Activated T-helper 1 cell treated with anti-CD3 and anti-CD28 coated beads, Interleukin-12 subunit alpha, Interleukin-12 subunit beta, Interleukin-2, Interleukin-4 antibody, amounts not matched to agents 30 ng/mL and 10 ng/mL and 1 ng/mL, durations not matched to agents 14 hours and 24 hours and 36 hours (primary cell): ENCODE measurements at regions of chr1 and their contacts with region 1.

Region 1: GRCh38 chr1:180981596-180982387 is 40.9 kb downstream of the STX6 start:
- DNase-seq: peak; percentile 62
- H3K4me3 Mint-ChIP-seq: peak overlapping the region; percentile 61
- H3K27ac Mint-ChIP-seq: peak overlapping the region; percentile 37
- H3K4me1 Mint-ChIP-seq: peaks cover 35% of the 10 kb centered on the region
- H3K27me3 Mint-ChIP-seq: no peaks in the 10 kb centered on the region

Region 2: DNA sequence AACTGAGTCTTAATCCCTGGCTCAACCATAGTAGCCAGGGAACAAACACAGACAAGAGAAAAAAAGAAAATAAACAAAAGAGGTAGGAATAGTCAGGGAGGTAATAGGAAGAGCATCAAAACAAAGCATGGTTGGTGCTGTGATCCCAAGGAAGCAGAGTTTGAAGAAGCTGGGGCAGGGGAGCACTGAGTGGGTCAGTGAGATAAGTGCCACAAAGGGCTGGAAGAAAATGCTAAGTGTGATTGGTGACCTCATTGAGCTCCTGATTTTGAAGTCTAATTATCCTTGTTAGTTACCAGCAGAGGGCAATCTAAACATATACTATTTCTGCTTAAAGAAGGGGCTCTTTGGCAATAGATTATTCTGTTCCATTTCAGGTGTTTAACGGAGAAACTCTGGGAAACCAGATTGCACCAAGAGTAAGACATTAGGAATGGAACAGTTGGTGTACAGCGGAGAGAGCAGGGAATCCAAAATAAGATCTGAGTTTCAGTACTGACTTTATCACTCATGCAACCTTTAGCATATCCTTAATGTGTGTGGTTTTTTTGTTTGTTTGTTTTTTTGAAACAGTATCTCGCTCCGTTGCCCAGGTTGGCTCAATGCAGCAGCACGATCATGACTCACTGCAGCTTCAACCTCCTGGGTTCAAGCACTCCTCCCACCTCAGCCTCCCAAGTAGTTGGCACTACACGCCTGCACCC is 99.8 kb before region 1 on chr1:
- intact Hi-C with region 1: loop called (anchors 5 kb)
- DNase-seq: no peak
- H3K4me3 Mint-ChIP-seq: no peak overlapping the region
- H3K27ac Mint-ChIP-seq: no peak overlapping the region
- H3K4me1 Mint-ChIP-seq: peaks cover 6% of the 10 kb centered on the region
- H3K27me3 Mint-ChIP-seq: no peaks in the 10 kb centered on the region

Region 3: DNA sequence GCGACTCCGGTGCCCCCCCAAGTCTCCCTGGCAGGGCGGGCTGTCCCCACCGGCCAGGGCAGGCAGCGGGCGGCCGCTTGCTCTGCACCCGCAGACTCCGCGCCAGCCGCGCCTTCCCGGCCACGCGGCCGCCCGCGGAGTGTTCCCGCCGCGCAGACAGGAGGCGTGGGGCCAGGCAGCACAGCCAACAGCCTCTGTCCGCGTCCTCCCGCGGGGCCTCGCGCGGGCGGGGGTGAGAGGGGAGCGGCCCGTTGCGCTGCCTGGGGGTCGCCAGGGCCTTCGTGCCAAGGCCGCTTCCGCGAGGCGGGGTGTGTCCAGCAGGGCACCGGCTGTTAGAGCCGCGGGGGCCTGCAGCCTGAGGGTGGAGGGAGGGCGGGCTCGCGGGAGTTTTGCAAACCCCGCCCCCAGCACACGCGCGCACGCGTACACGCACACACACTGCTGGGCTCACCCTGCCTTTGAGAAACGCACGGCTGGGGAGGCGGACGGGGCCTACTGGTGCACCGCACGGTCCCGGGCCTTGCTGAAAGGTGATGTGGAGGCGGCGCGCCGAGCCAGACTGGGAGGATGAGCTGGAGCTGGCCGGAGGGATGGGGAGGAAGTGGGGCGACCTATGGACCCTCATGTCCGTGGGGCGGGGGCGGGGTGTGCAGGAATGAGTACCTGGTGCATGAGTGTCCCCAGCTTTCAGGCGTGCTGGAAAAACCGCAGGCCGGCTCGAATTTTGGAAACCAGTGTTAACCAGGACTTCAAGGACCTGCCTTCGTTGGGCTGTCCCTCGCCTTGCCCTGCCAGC is 27.6 kb before region 1 on chr1:
- intact Hi-C with region 1: loop called (anchors 2 kb)
- DNase-seq: peak; percentile 49
- H3K4me3 Mint-ChIP-seq: peak overlapping the region; percentile 33
- H3K27ac Mint-ChIP-seq: no peak overlapping the region
- H3K4me1 Mint-ChIP-seq: no peaks in the 10 kb centered on the region
- H3K27me3 Mint-ChIP-seq: peaks cover 2% of the 10 kb centered on the region

Region 4: GRCh38 chr1:181014477-181015250 is 32.9 kb after region 1 on chr1:
- intact Hi-C with region 1: loop called (anchors 1 kb)
- DNase-seq: no peak
- H3K4me3 Mint-ChIP-seq: no peak overlapping the region
- H3K27ac Mint-ChIP-seq: no peak overlapping the region
- H3K4me1 Mint-ChIP-seq: peaks cover 44% of the 10 kb centered on the region
- H3K27me3 Mint-ChIP-seq: no peaks in the 10 kb centered on the region

Region 5: DNA sequence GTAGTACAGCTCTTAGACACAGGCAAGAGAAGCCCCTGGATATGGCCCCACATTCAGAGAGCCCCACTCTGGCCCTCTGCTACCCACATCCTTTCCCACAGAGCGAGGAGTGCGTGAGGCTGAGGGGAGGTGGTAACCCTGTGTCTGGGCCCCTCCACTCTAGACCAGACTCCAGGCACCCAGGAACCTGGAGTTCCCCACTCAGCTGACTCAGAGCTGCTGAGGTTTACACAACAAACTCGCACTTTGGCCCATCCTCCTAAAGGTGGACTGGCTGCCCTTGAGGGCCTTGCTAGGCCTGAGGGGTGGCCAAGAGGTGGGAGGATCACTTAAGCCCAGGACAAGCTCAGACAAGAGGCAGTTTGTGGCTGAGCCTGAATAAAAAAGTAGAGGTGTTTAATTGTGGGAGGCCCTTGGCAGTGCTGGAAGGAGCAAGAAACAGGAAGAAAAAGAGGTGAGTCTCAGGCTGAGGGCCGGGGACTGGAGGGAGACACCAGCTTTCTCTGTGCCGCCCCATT is 62.7 kb after region 1 on chr1:
- intact Hi-C with region 1: loop called (anchors 1 kb)
- DNase-seq: peak; percentile 63
- H3K4me3 Mint-ChIP-seq: peak overlapping the region; percentile 79
- H3K27ac Mint-ChIP-seq: peak overlapping the region; percentile 96
- H3K4me1 Mint-ChIP-seq: peaks cover 49% of the 10 kb centered on the region
- H3K27me3 Mint-ChIP-seq: no peaks in the 10 kb centered on the region